ENCODE measurements at regions of chr10 and their contacts with region 1.

Region 1: GRCh38 chr10:94315024-94315451 is 47.7 kb downstream of the NOC3L start:
- DNase-seq: peak; percentile 43
- ATAC-seq: 0 out of 2 replicates have a peak, but pooled peaks have one; percentile 25
- H3K4me3 ChIP-seq: no peak overlapping the region
- H3K27ac ChIP-seq: no peak overlapping the region
- H3K4me1 ChIP-seq: peaks cover 2% of the 10 kb centered on the region; the same call in 1 of the 2 replicates
- H3K27me3 ChIP-seq: no peaks in the 10 kb centered on the region
- CTCF ChIP-seq: no peak
- POLR2A ChIP-seq: no peak
- RAD21 ChIP-seq: no peak

Region 2: DNA sequence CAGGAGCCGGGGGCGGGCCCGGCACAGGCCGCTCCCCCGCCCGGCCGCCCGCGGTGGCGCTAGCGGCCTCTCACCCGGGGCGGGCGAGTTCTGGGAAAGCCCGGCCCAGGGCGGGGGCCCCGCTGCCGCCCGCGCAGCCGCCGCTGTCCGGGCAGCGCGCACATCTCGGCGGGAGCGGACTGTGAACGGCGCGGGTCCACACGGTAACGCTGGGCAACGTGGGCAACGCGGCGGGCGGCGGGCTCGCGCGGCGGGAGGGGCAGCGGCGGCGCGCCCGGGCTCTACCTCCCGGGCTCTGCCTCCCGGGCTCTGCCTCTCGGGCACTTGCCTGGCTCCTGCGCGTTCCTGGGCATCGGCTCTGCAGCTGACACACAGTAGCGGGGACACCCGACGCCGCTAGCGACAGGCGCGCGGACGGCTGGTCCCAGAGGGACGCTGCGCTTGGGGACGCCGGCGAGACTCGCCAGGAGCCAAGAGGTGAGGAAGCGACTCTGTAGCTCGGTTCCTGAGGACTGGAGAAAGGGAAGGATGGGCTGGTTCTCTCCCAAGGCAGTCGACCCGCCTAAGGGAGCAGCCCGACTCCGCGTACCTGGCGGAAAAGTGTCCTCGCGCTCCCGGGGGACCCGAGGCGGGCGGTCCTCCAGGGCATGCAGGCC is 321.1 kb before region 1 on chr10 and contains the start of gene PLCE1:
- CTCF ChIA-PET with region 1: no interaction called
- POLR2A ChIA-PET with region 1: no interaction called
- dilution Hi-C with region 1: no loop called
- in situ Hi-C with region 1: no loop called
- intact Hi-C with region 1: loop called (anchors 10 kb)
- DNase-seq: peak; percentile 19
- ATAC-seq: peak; percentile 88
- H3K4me3 ChIP-seq: peak within 1 kb of the TSS; percentile 56
- H3K27ac ChIP-seq: no peak within 1 kb of the TSS; the same call in 1 of the 2 replicates
- H3K4me1 ChIP-seq: peaks cover 7% of the 10 kb centered on the region
- H3K27me3 ChIP-seq: peaks cover 6% of the 10 kb centered on the region; the same call in 1 of the 2 replicates
- CTCF ChIP-seq: 0 out of 2 replicates have a peak, but pooled peaks have one; percentile 14
- POLR2A ChIP-seq: no peak
- RAD21 ChIP-seq: no peak
- total RNA-seq, gene PLCE1: 3.9 and 4.5 TPM in 2 replicates

Region 3: DNA sequence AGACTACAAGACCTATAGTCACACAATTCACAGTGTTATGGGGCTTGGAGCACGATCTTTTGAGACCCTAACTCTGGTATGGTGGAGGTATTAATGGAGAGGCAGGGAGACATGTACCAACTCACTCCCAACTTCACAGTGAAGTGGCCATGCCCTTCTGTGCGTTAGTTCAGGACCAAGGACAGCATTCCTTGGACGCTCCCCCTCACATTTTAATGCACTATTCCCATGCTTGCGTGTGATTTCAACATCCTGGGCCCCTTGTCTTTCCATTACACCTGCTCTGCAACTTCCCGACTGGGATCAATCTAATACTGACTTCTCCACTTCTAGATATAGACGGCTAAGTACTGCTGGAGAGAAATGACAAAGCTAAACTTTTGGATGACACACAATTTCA is 248.6 kb before region 1 on chr10:
- CTCF ChIA-PET with region 1: no interaction called
- POLR2A ChIA-PET with region 1: no interaction called
- dilution Hi-C with region 1: no loop called
- in situ Hi-C with region 1: loop called (anchors 5 kb)
- intact Hi-C with region 1: no loop called
- DNase-seq: peak; percentile 65
- ATAC-seq: peak; percentile 63
- H3K4me3 ChIP-seq: no peak overlapping the region
- H3K27ac ChIP-seq: no peak overlapping the region
- H3K4me1 ChIP-seq: no peaks in the 10 kb centered on the region
- H3K27me3 ChIP-seq: peaks cover 2% of the 10 kb centered on the region; the same call in 1 of the 2 replicates
- CTCF ChIP-seq: no peak
- POLR2A ChIP-seq: no peak
- RAD21 ChIP-seq: peak; percentile 21; the same call in 1 of the 2 replicates